Transverse colon (tissue), 4 donors: ENCODE measurements at regions of chr6 and their contacts with region 1.

Region 1: GRCh38 chr6:24689964-24690363 is 23.1 kb downstream of the ACOT13 start:
- DNase-seq: no peak
- H3K4me3 ChIP-seq: no peak overlapping the region
- H3K27ac ChIP-seq: no peak overlapping the region
- H3K4me1 ChIP-seq: no peaks in the 10 kb centered on the region
- H3K27me3 ChIP-seq: no peaks in the 10 kb centered on the region
- CTCF ChIP-seq: no peak
- EP300 ChIP-seq: no peak
- POLR2A ChIP-seq: no peak

Region 2: DNA sequence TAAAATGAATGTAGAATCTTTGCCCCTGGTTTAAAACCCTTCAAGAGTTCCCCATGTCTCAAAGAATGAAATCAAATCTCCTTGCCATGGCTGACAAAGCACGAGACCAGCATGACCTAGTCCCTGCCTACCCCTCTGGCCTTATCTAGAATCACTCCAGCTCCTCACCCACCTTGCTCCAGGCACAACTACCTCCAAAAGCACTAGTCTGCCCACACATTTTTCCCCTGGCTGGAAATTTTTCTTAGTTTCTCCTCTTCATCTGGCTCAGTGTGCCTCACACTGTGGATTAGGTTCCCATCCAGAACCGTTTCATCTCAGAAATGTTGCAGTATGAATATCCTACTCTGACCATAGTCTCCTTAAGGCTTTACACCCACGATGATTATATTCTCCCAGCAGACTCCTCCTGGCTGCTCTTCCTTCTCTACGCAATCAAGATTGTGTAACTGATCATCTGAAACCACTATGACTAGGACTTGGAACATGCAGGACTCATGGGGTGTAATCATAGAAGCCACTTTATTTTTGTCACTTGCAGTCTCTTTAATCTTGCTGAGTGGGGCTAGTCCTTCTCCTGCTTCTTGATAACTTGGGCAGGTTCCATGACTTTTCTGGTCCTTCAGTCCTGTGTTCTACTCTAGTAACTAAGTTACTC is 295.1 kb before region 1 on chr6:
- in situ Hi-C with region 1: no loop called
- intact Hi-C with region 1: no loop called
- DNase-seq: no peak
- H3K4me3 ChIP-seq: no peak overlapping the region
- H3K27ac ChIP-seq: no peak overlapping the region
- H3K4me1 ChIP-seq: no peaks in the 10 kb centered on the region
- H3K27me3 ChIP-seq: peaks cover 11% of the 10 kb centered on the region
- CTCF ChIP-seq: no peak
- EP300 ChIP-seq: no peak
- POLR2A ChIP-seq: no peak

Region 3: GRCh38 chr6:24431045-24431451 is 258.9 kb before region 1 on chr6:
- in situ Hi-C with region 1: loop called in 1 of 4 experiments (anchors 25 kb)
- intact Hi-C with region 1: no loop called
- DNase-seq: no peak
- H3K4me3 ChIP-seq: no peak overlapping the region
- H3K27ac ChIP-seq: no peak overlapping the region
- H3K4me1 ChIP-seq: no peaks in the 10 kb centered on the region
- H3K27me3 ChIP-seq: no peaks in the 10 kb centered on the region
- CTCF ChIP-seq: peak; percentile 58 to 75 (median 70)
- EP300 ChIP-seq: no peak
- POLR2A ChIP-seq: no peak

Region 4: GRCh38 chr6:24504602-24505586 is 185.1 kb before region 1 on chr6:
- in situ Hi-C with region 1: loop called in 1 of 4 experiments (anchors 10 kb)
- intact Hi-C with region 1: no loop called
- DNase-seq: peak; percentile 60
- H3K4me3 ChIP-seq: no peak overlapping the region
- H3K27ac ChIP-seq: peak overlapping the region in 2 of 4 donors; percentile 15 to 54
- H3K4me1 ChIP-seq: peaks cover 0 to 11% (median 0%) of the 10 kb centered on the region in 4 donors
- H3K27me3 ChIP-seq: no peaks in the 10 kb centered on the region
- CTCF ChIP-seq: no peak
- EP300 ChIP-seq: no peak
- POLR2A ChIP-seq: no peak

Region 5: GRCh38 chr6:24574809-24575208 is 115.2 kb before region 1 on chr6:
- in situ Hi-C with region 1: loop called (anchors 5 kb)
- intact Hi-C with region 1: no loop called
- DNase-seq: no peak
- H3K4me3 ChIP-seq: no peak overlapping the region
- H3K27ac ChIP-seq: no peak overlapping the region
- H3K4me1 ChIP-seq: no peaks in the 10 kb centered on the region
- H3K27me3 ChIP-seq: no peaks in the 10 kb centered on the region
- CTCF ChIP-seq: no peak
- EP300 ChIP-seq: no peak
- POLR2A ChIP-seq: no peak

Region 6: GRCh38 chr6:24581084-24581669 is 108.8 kb before region 1 on chr6:
- in situ Hi-C with region 1: loop called (anchors 5 kb)
- intact Hi-C with region 1: no loop called
- DNase-seq: peak; percentile 81
- H3K4me3 ChIP-seq: no peak overlapping the region
- H3K27ac ChIP-seq: no peak overlapping the region
- H3K4me1 ChIP-seq: peaks cover 0 to 10% (median 5%) of the 10 kb centered on the region in 4 donors
- H3K27me3 ChIP-seq: no peaks in the 10 kb centered on the region
- CTCF ChIP-seq: peak; percentile 66 to 80 (median 76)
- EP300 ChIP-seq: no peak
- POLR2A ChIP-seq: no peak

Region 7: DNA sequence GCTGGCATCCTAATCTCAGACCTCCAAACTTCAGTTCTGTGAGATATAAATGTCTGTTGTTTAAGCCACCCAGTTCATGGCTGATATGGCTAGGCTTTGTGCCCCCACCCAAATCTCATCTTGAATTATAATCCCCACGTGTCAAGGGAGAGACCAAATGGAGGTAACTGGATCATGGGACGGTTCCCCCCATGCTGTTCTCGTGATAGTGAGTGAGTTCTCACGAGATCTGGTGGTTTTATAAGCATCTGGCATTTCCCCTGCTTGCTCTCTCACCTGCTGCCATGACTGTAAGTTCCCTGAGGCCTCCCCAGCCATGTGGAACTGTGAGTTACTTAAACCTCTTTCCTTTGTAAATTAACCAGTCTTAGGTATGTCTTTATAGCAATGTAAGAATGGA is 100.6 kb before region 1 on chr6:
- in situ Hi-C with region 1: loop called in 3 of 4 experiments (anchors 5 kb)
- intact Hi-C with region 1: loop called (anchors 2 kb)
- DNase-seq: no peak
- H3K4me3 ChIP-seq: no peak overlapping the region
- H3K27ac ChIP-seq: no peak overlapping the region
- H3K4me1 ChIP-seq: no peaks in the 10 kb centered on the region
- H3K27me3 ChIP-seq: no peaks in the 10 kb centered on the region
- CTCF ChIP-seq: no peak
- EP300 ChIP-seq: no peak
- POLR2A ChIP-seq: no peak